ENCODE measurements at regions of chr9 and their contacts with region 1.

Region 1: GRCh38 chr9:95771556-95772246 is 103.8 kb upstream of the ERCC6L2 start:
- DNase-seq: no peak
- H3K4me3 ChIP-seq: peak overlapping the region in 3 of 4 experiments; percentile 30 to 47 (median 37); a peak in 4 of 8 replicates
- H3K27ac ChIP-seq: no peak overlapping the region
- H3K4me1 ChIP-seq: peaks cover 13 to 27% (median 19%) of the 10 kb centered on the region in 4 experiments
- H3K27me3 ChIP-seq: peaks cover 0 to 8% (median 3%) of the 10 kb centered on the region in 4 experiments; a peak in 2 of 7 replicates
- CTCF ChIP-seq: no peak
- EP300 ChIP-seq: no peak
- POLR2A ChIP-seq: no peak
- RAD21 ChIP-seq: no peak

Region 2: GRCh38 chr9:95666096-95666784 is 105.5 kb before region 1 on chr9:
- CTCF ChIA-PET with region 1: no interaction called
- POLR2A ChIA-PET with region 1: no interaction called
- DNase-seq: no peak
- H3K4me3 ChIP-seq: peak overlapping the region in 1 of 4 experiments; percentile 28; a peak in 1 of 8 replicates
- H3K27ac ChIP-seq: no peak overlapping the region
- H3K4me1 ChIP-seq: peaks cover 0 to 5% (median 4%) of the 10 kb centered on the region in 4 experiments; a peak in 6 of 7 replicates
- H3K27me3 ChIP-seq: no peaks in the 10 kb centered on the region
- CTCF ChIP-seq: no peak
- EP300 ChIP-seq: no peak
- POLR2A ChIP-seq: no peak
- RAD21 ChIP-seq: no peak

Region 3: GRCh38 chr9:95756986-95757385 is 14.7 kb before region 1 on chr9:
- CTCF ChIA-PET with region 1: interaction called, 6 read pairs
- POLR2A ChIA-PET with region 1: interaction called, 14 read pairs
- DNase-seq: no peak
- H3K4me3 ChIP-seq: no peak overlapping the region
- H3K27ac ChIP-seq: no peak overlapping the region
- H3K4me1 ChIP-seq: peaks cover 24 to 45% (median 27%) of the 10 kb centered on the region in 4 experiments
- H3K27me3 ChIP-seq: peaks cover 0 to 30% (median 19%) of the 10 kb centered on the region in 4 experiments; a peak in 5 of 7 replicates
- CTCF ChIP-seq: no peak
- EP300 ChIP-seq: no peak
- POLR2A ChIP-seq: no peak
- RAD21 ChIP-seq: no peak